PC-9 (cell line): ENCODE measurements at regions of chr20 and their contacts with region 1.

Region 1: DNA sequence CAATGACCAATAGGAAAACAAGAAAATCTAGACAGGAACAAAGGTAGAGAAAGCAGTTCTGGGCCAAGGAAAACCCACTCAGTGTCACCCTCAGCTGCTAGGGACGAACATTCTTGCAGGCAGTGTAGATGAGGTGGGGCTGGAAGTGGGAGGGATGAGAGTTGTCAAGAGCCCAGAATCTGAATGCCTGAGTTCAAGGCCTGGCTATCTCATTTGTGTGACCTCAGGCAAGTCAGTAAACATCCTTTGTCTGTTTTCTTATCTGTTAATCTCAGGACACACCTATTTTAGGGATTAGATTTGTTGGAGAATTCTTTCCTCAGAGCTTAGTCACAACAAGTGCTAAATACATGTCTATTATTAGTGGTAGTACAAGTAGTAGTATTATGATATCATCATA is 50.9 kb upstream of the KIF16B start:
- DNase-seq: peak in 1 of 2 experiments; percentile 44
- H3K4me3 ChIP-seq: no peak overlapping the region
- H3K27ac ChIP-seq: no peak overlapping the region
- H3K4me1 ChIP-seq: no peaks in the 10 kb centered on the region
- H3K27me3 ChIP-seq: no peaks in the 10 kb centered on the region
- CTCF ChIP-seq: no peak

Region 2: DNA sequence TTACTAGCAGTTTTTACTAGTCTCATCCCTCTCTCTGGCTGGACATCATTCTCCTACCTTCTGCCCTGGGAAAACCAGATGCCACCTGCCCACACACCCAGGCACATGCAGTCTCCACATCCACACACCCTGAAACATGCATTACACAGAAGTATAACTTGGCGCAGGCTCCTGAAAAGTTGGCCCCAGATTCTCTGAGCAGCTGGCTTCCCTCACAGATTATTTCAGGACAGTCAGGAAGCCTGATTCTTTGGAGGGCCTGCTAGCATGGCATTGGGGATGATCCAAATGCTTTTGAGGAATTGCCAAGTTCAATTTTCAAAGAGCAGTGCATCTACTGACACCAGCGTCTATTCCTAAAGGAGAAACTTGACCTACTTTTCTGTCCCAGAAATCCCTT is 23.1 kb before region 1 on chr20:
- CTCF ChIA-PET with region 1: no interaction called
- POLR2A ChIA-PET with region 1: no interaction called
- intact Hi-C with region 1: loop called (anchors 1 kb)
- DNase-seq: no peak
- H3K4me3 ChIP-seq: no peak overlapping the region
- H3K27ac ChIP-seq: no peak overlapping the region
- H3K4me1 ChIP-seq: no peaks in the 10 kb centered on the region
- H3K27me3 ChIP-seq: 0 out of 2 replicates have a peak, but pooled peaks cover 4% of the 10 kb centered on the region
- CTCF ChIP-seq: no peak